H1 (cell line): ENCODE measurements at regions of chr17 and their contacts with region 1.

Region 1: GRCh38 chr17:57902800-57903759 is 52.1 kb downstream of the CUEDC1 start:
- DNase-seq: no peak
- H3K4me3 ChIP-seq: no peak overlapping the region
- H3K27ac ChIP-seq: no peak overlapping the region
- H3K4me1 ChIP-seq: peaks cover 5 to 36% (median 26%) of the 10 kb centered on the region in 4 experiments
- H3K27me3 ChIP-seq: no peaks in the 10 kb centered on the region
- CTCF ChIP-seq: no peak
- EP300 ChIP-seq: no peak
- POLR2A ChIP-seq: no peak
- RAD21 ChIP-seq: no peak

Region 2: GRCh38 chr17:57868007-57868909 is 34.8 kb before region 1 on chr17:
- CTCF ChIA-PET with region 1: interaction called, 14 read pairs
- POLR2A ChIA-PET with region 1: interaction called, 3 read pairs
- DNase-seq: peak; percentile 58 to 71
- H3K4me3 ChIP-seq: no peak overlapping the region
- H3K27ac ChIP-seq: no peak overlapping the region
- H3K4me1 ChIP-seq: peaks cover 0 to 17% (median 10%) of the 10 kb centered on the region in 4 experiments; a peak in 6 of 7 replicates
- H3K27me3 ChIP-seq: no peaks in the 10 kb centered on the region; a peak in 2 of 7 replicates
- CTCF ChIP-seq: peak; percentile 65 to 79 (median 73)
- EP300 ChIP-seq: no peak
- POLR2A ChIP-seq: no peak
- RAD21 ChIP-seq: peak; percentile 65 to 68

Region 3: DNA sequence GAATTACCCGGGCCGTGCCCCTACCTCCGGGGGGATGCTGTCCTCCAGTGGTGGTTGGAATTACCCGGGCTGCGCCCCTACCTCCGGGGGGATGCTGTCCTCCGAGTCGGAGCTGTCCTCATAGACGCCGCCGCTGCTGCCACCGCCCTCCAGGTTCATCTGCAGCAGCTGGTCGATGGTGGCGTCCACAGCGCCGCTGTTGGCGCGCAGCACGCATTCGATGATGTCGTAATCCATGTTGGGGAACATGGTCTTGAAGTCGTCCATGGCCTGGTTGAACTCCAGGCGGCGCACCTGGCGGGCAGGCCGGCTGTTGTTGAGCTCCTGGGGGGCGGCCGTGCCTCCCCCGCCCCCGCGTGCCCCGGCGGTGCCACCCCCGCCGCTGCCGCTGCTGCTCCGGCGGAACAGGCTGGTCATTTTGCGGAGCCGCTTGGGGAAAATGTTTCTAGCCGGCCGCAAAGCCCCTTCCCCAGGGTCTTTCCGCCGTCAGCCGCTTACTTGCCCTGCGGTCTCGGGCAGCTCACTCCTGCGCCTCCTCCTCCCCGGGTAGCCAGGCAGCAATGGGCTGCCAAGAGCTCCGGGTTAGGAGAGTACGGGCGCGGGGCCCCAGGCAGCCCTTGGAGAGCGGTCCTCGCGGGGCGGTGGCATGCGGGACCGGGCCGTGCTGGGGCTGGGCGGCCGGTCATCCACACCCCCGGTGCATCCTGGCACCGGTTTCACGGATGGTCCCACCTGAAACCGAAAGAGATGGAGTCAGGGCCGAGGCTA is 17.7 kb before region 1 on chr17:
- CTCF ChIA-PET with region 1: interaction called, 29 read pairs
- POLR2A ChIA-PET with region 1: interaction called, 9 read pairs
- DNase-seq: no peak
- H3K4me3 ChIP-seq: no peak overlapping the region
- H3K27ac ChIP-seq: no peak overlapping the region
- H3K4me1 ChIP-seq: peaks cover 7 to 18% (median 12%) of the 10 kb centered on the region in 4 experiments
- H3K27me3 ChIP-seq: no peaks in the 10 kb centered on the region
- CTCF ChIP-seq: 0 out of 4 replicates have a peak, but pooled peaks of 1 of the 3 experiments have one; percentile 3
- EP300 ChIP-seq: no peak
- POLR2A ChIP-seq: no peak
- RAD21 ChIP-seq: no peak; a peak in 1 of 4 replicates

Region 4: DNA sequence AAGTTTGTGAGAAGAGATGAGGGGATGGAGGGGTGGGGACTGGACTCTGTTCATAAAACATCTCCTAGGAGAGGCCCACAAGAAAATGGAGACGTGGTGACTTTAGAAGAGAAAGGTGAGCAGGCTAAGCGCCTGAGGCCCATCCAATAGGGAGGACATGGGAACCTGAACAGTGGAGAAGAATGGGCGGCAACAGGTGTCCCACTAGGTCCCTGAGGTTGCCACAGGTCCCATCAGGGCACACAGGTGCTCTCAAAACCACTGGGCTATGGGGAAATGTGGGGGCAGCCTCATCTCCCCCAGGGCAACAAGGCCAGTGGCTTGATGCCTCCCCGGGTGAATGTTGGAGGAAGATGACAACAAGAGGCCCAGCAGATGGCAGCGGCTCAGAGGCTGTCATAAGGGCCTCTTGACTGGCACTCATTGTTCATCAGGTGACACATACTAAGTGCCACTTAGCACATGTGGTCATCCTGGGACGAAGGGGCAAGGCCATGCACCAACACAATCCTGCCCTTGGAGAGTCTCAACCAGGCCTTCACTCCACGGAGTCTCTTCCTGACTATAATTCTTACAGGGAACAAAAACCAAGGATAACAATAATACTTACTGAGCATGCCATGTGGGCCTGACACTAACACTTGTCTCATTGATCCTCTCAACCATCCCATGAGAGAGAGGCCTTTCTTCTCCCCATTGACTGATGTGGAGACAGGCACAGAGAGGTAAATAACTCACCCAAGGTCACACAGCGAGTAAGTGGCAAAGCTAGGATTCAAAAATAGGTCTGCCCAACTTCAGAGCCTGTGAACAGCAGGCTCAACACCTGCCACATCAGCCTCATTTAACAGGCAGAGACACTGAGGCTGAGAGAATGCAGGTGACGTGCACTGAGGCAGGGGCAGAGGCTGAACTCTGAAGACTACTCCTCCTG is 14.1 kb after region 1 on chr17:
- CTCF ChIA-PET with region 1: interaction called, 11 read pairs
- POLR2A ChIA-PET with region 1: interaction called, 4 read pairs
- DNase-seq: no peak
- H3K4me3 ChIP-seq: no peak overlapping the region
- H3K27ac ChIP-seq: peak overlapping the region; percentile 68; the same call in 1 of the 2 replicates
- H3K4me1 ChIP-seq: peaks cover 5 to 21% (median 14%) of the 10 kb centered on the region in 4 experiments; a peak in 5 of 7 replicates
- H3K27me3 ChIP-seq: no peaks in the 10 kb centered on the region
- CTCF ChIP-seq: peak in 1 of 3 experiments; percentile 2; a peak in 1 of 4 replicates
- EP300 ChIP-seq: no peak
- POLR2A ChIP-seq: no peak
- RAD21 ChIP-seq: peak in 1 of 2 experiments; percentile 20; a peak in 1 of 4 replicates

Region 5: DNA sequence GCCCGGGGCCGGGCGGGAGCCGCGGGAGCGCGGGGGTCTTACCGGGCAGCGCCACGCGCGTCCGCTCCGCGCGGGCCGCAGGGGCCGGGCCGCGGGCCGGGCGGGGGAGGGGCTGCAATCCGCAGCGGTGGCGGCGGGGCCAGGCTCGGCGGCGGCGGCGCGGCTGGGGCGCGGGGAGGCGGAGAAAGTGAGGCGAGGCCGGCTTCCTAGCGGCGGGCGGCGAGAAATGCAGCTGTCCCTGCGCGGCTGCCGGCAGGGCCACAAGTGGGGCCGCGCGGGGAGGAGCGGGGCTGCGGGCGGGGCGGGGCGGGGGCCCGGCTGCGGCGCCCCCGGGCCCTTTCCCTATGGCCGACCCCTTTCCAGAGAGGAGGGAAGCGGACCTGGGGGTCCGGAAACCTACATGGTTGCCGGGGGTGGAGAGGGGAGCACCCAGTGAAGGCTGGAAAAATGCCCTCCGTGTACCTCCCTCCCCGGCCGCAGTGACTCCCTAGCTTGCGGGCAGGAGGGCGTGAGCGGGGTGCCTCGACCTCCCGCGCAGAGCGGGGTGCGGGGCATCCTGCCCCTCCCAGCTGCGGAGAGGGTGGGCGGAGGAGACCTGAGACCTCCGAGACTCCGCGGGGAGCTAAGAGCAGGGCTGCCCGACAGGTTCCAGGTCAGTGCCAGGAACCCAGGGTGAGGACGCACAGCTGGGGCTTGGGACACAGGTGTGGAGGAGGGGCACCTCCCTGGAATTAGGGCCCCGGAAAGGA is 52.3 kb after region 1 on chr17 and contains the start of gene CUEDC1:
- CTCF ChIA-PET with region 1: interaction called, 16 read pairs
- POLR2A ChIA-PET with region 1: interaction called, 18 read pairs
- DNase-seq: peak in 1 of 2 experiments; percentile 82
- H3K4me3 ChIP-seq: peak within 1 kb of the TSS; percentile 32 to 86 (median 66)
- H3K27ac ChIP-seq: no peak within 1 kb of the TSS
- H3K4me1 ChIP-seq: peaks cover 12 to 23% (median 14%) of the 10 kb centered on the region in 4 experiments
- H3K27me3 ChIP-seq: peaks cover 0 to 30% (median 20%) of the 10 kb centered on the region in 4 experiments; a peak in 6 of 7 replicates
- CTCF ChIP-seq: peak; percentile 16 to 63 (median 37)
- EP300 ChIP-seq: no peak
- POLR2A ChIP-seq: no peak
- RAD21 ChIP-seq: peak in 1 of 2 experiments; percentile 23; a peak in 2 of 4 replicates
- total RNA-seq, gene CUEDC1: 7.8 and 10.7 TPM in 2 replicates

Region 6: GRCh38 chr17:58112970-58113631 is 210.0 kb after region 1 on chr17:
- CTCF ChIA-PET with region 1: interaction called, 11 read pairs
- POLR2A ChIA-PET with region 1: no interaction called
- DNase-seq: peak in 1 of 2 experiments; percentile 96
- H3K4me3 ChIP-seq: no peak overlapping the region
- H3K27ac ChIP-seq: no peak overlapping the region
- H3K4me1 ChIP-seq: no peaks in the 10 kb centered on the region
- H3K27me3 ChIP-seq: no peaks in the 10 kb centered on the region
- CTCF ChIP-seq: peak; percentile 86 to 99 (median 93)
- EP300 ChIP-seq: no peak
- POLR2A ChIP-seq: no peak
- RAD21 ChIP-seq: peak; percentile 98 to 99